Naive thymus-derived CD4-positive, alpha-beta T cell (primary cell): ENCODE measurements at regions of chr4 and their contacts with region 1.

Region 1: DNA sequence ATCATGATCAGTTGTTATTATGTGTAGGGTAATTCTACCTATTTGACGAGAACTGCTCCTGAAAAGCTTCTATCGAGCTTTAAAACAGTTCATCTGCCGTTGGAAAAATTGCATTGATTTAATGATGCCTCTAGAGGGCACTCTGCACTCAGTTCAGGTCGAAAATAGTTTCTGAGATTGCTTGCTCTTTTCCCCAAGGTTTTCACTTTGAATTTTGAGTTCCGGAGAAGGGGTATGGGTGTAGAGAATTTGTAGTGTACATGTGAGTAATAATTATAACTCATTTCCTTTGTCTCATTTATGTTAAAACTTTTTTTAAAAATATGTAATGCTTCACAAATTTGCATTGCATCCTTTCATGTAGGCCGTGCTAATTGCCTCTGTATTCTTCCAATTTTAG is 28.4 kb upstream of the TNIP3 start:
- DNase-seq: peak in 5 of 9 donors; percentile 31 to 56 (median 50)
- ATAC-seq: peak; percentile 51
- H3K4me3 ChIP-seq: no peak overlapping the region
- H3K4me3 Mint-ChIP-seq: peak overlapping the region; percentile 22 to 88 (median 79)
- H3K27ac ChIP-seq: peak overlapping the region; percentile 18
- H3K27ac Mint-ChIP-seq: peak overlapping the region; percentile 62 to 92 (median 81)
- H3K4me1 ChIP-seq: peaks cover 32 to 50% of the 10 kb centered on the region in 2 donors
- H3K4me1 Mint-ChIP-seq: peaks cover 22 to 57% (median 52%) of the 10 kb centered on the region in 7 donors
- H3K27me3 ChIP-seq: no peaks in the 10 kb centered on the region
- H3K27me3 Mint-ChIP-seq: no peaks in the 10 kb centered on the region

Region 2: GRCh38 chr4:120156120-120156718 is 1036.3 kb before region 1 on chr4:
- CTCF ChIA-PET with region 1: interaction called, 7 read pairs
- POLR2A ChIA-PET with region 1: no interaction called
- intact Hi-C with region 1: loop called (anchors 1 to 5 kb)
- DNase-seq: peak in 7 of 9 donors; percentile 22 to 63 (median 57)
- ATAC-seq: peak; percentile 63
- H3K4me3 ChIP-seq: no peak overlapping the region
- H3K4me3 Mint-ChIP-seq: no peak overlapping the region
- H3K27ac ChIP-seq: no peak overlapping the region
- H3K27ac Mint-ChIP-seq: no peak overlapping the region
- H3K4me1 ChIP-seq: no peaks in the 10 kb centered on the region
- H3K4me1 Mint-ChIP-seq: no peaks in the 10 kb centered on the region
- H3K27me3 ChIP-seq: no peaks in the 10 kb centered on the region
- H3K27me3 Mint-ChIP-seq: peaks cover 0 to 4% (median 0%) of the 10 kb centered on the region in 5 donors

Region 3: GRCh38 chr4:121096629-121097028 is 95.9 kb before region 1 on chr4:
- CTCF ChIA-PET with region 1: interaction called, 4 read pairs
- POLR2A ChIA-PET with region 1: no interaction called
- intact Hi-C with region 1: loop called in 1 of 2 experiments (anchors 2 kb)
- DNase-seq: peak in 5 of 9 donors; percentile 29 to 52 (median 41)
- ATAC-seq: no peak
- H3K4me3 ChIP-seq: no peak overlapping the region
- H3K4me3 Mint-ChIP-seq: no peak overlapping the region
- H3K27ac ChIP-seq: no peak overlapping the region
- H3K27ac Mint-ChIP-seq: no peak overlapping the region
- H3K4me1 ChIP-seq: no peaks in the 10 kb centered on the region
- H3K4me1 Mint-ChIP-seq: peaks cover 0 to 5% (median 0%) of the 10 kb centered on the region in 7 donors
- H3K27me3 ChIP-seq: no peaks in the 10 kb centered on the region
- H3K27me3 Mint-ChIP-seq: peaks cover 0 to 30% (median 0%) of the 10 kb centered on the region in 5 donors

Region 4: DNA sequence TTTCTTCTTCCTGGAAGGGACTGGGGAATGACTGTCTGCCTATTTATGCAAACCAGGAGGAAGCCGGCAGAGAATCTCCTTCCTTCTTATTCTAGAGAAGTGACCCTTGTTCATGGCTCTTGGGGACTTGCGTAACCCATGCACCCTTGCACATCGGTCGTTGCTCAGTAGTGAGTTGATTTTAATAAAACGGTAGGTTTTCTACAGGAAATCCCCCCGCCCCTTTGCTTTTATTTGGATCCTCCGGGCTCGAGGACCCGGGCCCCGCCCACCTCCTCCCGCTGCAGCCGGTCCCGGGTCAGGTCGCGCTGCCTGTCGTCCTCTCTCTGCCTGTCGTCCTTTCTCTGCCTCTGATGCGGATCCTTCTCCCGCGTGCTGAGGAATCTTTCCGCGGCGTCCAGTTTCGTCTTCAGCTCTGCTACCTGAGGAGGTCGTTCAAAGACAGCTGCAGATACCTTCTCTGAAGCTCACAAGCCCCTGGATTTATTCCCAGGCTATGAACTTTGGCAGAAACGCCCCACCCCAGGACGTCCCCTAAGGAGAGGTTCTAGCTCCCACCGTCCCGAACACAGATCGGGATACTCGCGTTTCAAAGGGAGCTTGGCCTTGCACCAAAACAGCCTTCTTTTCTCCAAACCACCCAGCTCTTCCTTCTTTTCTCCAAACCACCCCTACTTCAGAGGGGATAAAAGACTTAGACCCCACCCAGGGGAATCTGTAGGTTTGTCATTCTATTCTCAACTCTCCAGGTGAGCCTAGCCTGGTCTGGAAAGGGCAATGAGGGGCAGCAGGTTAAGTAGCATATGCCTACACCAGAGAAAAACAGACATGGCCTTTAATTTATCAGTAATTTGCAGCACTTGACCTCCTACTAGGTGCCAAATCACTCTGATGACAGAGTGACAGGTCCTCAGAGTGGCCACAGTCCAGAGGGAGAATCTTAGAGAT is 35.4 kb before region 1 on chr4:
- CTCF ChIA-PET with region 1: interaction called, 14 read pairs
- POLR2A ChIA-PET with region 1: interaction called, 63 read pairs
- intact Hi-C with region 1: loop called (anchors 1 kb)
- DNase-seq: peak in 7 of 9 donors; percentile 13 to 37 (median 32)
- ATAC-seq: peak; percentile 44
- H3K4me3 ChIP-seq: peak overlapping the region; percentile 70
- H3K4me3 Mint-ChIP-seq: peak overlapping the region; percentile 88 to 99 (median 94)
- H3K27ac ChIP-seq: peak overlapping the region; percentile 71
- H3K27ac Mint-ChIP-seq: peak overlapping the region; percentile 74 to 99 (median 96)
- H3K4me1 ChIP-seq: peaks cover 36 to 52% of the 10 kb centered on the region in 2 donors
- H3K4me1 Mint-ChIP-seq: peaks cover 25 to 71% (median 64%) of the 10 kb centered on the region in 7 donors
- H3K27me3 ChIP-seq: no peaks in the 10 kb centered on the region
- H3K27me3 Mint-ChIP-seq: peaks cover 0 to 35% (median 0%) of the 10 kb centered on the region in 5 donors

Region 5: GRCh38 chr4:121252224-121252806 is 59.8 kb after region 1 on chr4:
- CTCF ChIA-PET with region 1: interaction called, 90 read pairs
- POLR2A ChIA-PET with region 1: interaction called, 4 read pairs
- intact Hi-C with region 1: loop called (anchors 1 kb)
- DNase-seq: peak in 8 of 9 donors; percentile 26 to 49 (median 44)
- ATAC-seq: peak; percentile 45
- H3K4me3 ChIP-seq: no peak overlapping the region
- H3K4me3 Mint-ChIP-seq: no peak overlapping the region
- H3K27ac ChIP-seq: no peak overlapping the region
- H3K27ac Mint-ChIP-seq: peak overlapping the region in 2 of 9 donors; percentile 6 to 58
- H3K4me1 ChIP-seq: peaks cover 14 to 49% of the 10 kb centered on the region in 2 donors
- H3K4me1 Mint-ChIP-seq: peaks cover 12 to 65% (median 61%) of the 10 kb centered on the region in 7 donors
- H3K27me3 ChIP-seq: no peaks in the 10 kb centered on the region
- H3K27me3 Mint-ChIP-seq: no peaks in the 10 kb centered on the region

Region 6: DNA sequence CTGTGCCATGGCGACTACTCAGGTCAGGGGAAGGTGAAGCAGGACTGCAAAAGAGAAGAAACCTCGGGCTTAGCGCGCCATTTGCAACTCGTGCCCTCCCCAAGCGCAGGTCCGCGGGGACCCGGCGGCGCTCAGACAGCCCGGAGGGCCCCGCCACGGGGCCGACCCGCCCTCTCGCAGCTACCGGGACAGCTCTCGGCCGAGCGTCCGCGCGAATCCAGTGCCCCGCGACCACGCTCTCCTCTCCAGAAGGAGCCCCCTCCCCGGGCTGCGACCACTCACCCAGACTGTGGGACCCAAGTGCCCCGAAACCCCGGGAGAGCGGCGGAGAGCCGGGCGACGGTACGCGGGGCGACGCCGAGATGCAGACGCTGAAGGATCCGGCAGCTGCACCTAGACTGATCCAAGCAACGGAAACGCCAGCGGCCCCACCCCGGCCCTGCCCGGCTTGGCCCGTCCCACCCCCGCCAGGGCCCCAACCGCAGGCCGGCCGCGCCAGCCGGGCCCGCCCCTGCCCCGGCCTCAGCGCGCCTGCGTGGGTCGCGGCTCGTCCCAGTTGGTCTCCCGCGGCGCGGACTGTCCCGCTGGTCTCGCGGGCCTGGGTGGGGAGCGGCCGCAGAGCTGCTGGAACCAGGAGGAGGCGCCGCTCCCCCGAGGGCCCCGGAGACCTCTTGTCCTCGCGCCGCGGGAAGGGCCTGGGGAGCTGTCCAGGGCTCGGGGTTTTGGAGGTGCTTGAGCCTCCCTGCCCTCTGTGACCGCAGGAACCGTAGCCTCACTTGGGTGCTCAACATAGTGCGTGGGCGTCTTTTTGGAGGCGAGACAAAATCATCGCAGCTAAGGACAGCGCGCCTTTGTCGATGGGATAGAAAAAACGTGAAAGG is 504.3 kb after region 1 on chr4 and contains the start of gene ANXA5:
- CTCF ChIA-PET with region 1: no interaction called
- POLR2A ChIA-PET with region 1: no interaction called
- intact Hi-C with region 1: loop called in 1 of 2 experiments (anchors 5 kb)
- DNase-seq: peak; percentile 8 to 85 (median 41)
- ATAC-seq: peak; percentile 92
- H3K4me3 ChIP-seq: peak within 1 kb of the TSS; percentile 87
- H3K4me3 Mint-ChIP-seq: peak within 1 kb of the TSS; percentile 94 to 99 (median 97)
- H3K27ac ChIP-seq: peak within 1 kb of the TSS; percentile 39
- H3K27ac Mint-ChIP-seq: peak within 1 kb of the TSS; percentile 67 to 99 (median 87)
- H3K4me1 ChIP-seq: peaks cover 4 to 13% of the 10 kb centered on the region in 2 donors
- H3K4me1 Mint-ChIP-seq: peaks cover 12 to 43% (median 19%) of the 10 kb centered on the region in 7 donors
- H3K27me3 ChIP-seq: no peaks in the 10 kb centered on the region
- H3K27me3 Mint-ChIP-seq: peaks cover 0 to 43% (median 28%) of the 10 kb centered on the region in 5 donors
- total RNA-seq, gene ANXA5: 25.5 to 180 (median 49.5) TPM